ENCODE measurements at regions of chr19 and their contacts with region 1.

Region 1: GRCh38 chr19:36014029-36014924 is at the start of gene ALKBH6:
- DNase-seq: peak; percentile 94
- ATAC-seq: peak; percentile 99
- H3K4me3 Mint-ChIP-seq: peak within 1 kb of the TSS; percentile 98
- H3K27ac Mint-ChIP-seq: peak within 1 kb of the TSS; percentile 95
- H3K4me1 Mint-ChIP-seq: peaks cover 29% of the 10 kb centered on the region
- H3K27me3 Mint-ChIP-seq: no peaks in the 10 kb centered on the region
- CTCF ChIP-seq: no peak
- total RNA-seq, gene ALKBH6: 32.7 and 39.7 TPM in 2 replicates

Region 2: DNA sequence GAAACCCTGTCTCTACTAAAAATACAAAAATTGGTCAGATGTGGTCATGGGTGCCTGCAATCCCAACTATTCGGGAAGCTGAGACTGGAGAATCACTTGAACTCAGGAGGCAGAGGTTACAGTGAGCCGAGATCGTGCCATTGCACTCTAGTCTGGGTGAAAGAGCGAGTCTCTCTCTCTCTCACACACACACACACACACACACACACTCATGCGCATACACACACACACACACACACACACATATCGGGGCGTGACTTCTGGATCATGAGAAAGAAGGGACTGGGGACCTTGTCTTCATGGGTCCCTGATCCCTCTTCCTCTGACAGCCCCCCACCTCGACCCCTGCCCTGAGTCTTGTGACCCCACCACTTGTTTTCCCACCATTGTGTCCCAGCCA is 31.1 kb before region 1 on chr19:
- CTCF ChIA-PET with region 1: no interaction called
- POLR2A ChIA-PET with region 1: no interaction called
- intact Hi-C with region 1: no loop called
- DNase-seq: no peak
- ATAC-seq: no peak
- H3K4me3 Mint-ChIP-seq: no peak overlapping the region
- H3K27ac Mint-ChIP-seq: no peak overlapping the region
- H3K4me1 Mint-ChIP-seq: peaks cover 8% of the 10 kb centered on the region
- H3K27me3 Mint-ChIP-seq: peaks cover 44% of the 10 kb centered on the region
- CTCF ChIP-seq: no peak

Region 3: GRCh38 chr19:35995048-35995993 is 19.0 kb before region 1 on chr19 and contains the start of gene SDHAF1:
- CTCF ChIA-PET with region 1: no interaction called
- POLR2A ChIA-PET with region 1: interaction called, 19 read pairs
- intact Hi-C with region 1: loop called (anchors 1 kb)
- DNase-seq: peak; percentile 88
- ATAC-seq: peak; percentile 94
- H3K4me3 Mint-ChIP-seq: peak within 1 kb of the TSS; percentile 94
- H3K27ac Mint-ChIP-seq: peak within 1 kb of the TSS; percentile 94
- H3K4me1 Mint-ChIP-seq: peaks cover 33% of the 10 kb centered on the region
- H3K27me3 Mint-ChIP-seq: no peaks in the 10 kb centered on the region
- CTCF ChIP-seq: no peak
- total RNA-seq, gene SDHAF1: 20.3 and 21.9 TPM in 2 replicates

Region 4: DNA sequence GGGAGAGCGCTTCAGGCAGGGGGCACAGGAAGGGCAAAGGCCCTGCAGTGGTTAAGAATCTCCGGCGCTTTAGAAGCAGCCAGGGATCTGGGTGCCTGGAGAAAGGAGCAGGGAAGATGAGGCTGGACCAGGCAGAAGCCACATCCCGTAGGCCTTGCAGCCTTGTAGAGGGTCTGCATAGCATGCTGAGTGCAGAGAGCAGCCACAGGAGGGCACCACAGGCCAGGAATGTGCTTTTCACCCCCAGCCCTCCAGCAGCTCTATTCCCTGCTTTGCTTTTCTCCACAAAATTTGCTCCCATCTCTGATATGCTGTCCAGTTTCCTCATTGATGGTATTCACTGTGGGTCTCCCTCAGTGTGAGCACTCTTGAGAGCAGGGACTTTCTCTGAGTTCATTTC is 46.2 kb after region 1 on chr19:
- CTCF ChIA-PET with region 1: no interaction called
- POLR2A ChIA-PET with region 1: no interaction called
- intact Hi-C with region 1: no loop called
- DNase-seq: no peak
- ATAC-seq: no peak
- H3K4me3 Mint-ChIP-seq: no peak overlapping the region
- H3K27ac Mint-ChIP-seq: no peak overlapping the region
- H3K4me1 Mint-ChIP-seq: peaks cover 6% of the 10 kb centered on the region
- H3K27me3 Mint-ChIP-seq: no peaks in the 10 kb centered on the region
- CTCF ChIP-seq: no peak

Region 5: GRCh38 chr19:36139473-36140303 is 125.4 kb after region 1 on chr19 and contains the start of gene CAPNS1:
- CTCF ChIA-PET with region 1: no interaction called
- POLR2A ChIA-PET with region 1: interaction called, 3 read pairs
- intact Hi-C with region 1: loop called (anchors 1 kb)
- DNase-seq: peak; percentile 93
- ATAC-seq: peak; percentile 76
- H3K4me3 Mint-ChIP-seq: peak within 1 kb of the TSS; percentile 97
- H3K27ac Mint-ChIP-seq: peak within 1 kb of the TSS; percentile 97
- H3K4me1 Mint-ChIP-seq: peaks cover 16% of the 10 kb centered on the region
- H3K27me3 Mint-ChIP-seq: peaks cover 2% of the 10 kb centered on the region
- CTCF ChIP-seq: no peak
- total RNA-seq, gene CAPNS1: 442 and 477 TPM in 2 replicates